Sciatic nerve (tissue), 2 donors: ENCODE measurements at regions of chr9 and their contacts with region 1.

Region 1: GRCh38 chr9:75149841-75150241 is 61.5 kb downstream of the OSTF1 start:
- DNase-seq: no peak
- ATAC-seq: no peak

Region 2: GRCh38 chr9:75096796-75097195 is 53.0 kb before region 1 on chr9:
- intact Hi-C with region 1: loop called (anchors 10 kb)
- DNase-seq: no peak
- ATAC-seq: no peak

Region 3: DNA sequence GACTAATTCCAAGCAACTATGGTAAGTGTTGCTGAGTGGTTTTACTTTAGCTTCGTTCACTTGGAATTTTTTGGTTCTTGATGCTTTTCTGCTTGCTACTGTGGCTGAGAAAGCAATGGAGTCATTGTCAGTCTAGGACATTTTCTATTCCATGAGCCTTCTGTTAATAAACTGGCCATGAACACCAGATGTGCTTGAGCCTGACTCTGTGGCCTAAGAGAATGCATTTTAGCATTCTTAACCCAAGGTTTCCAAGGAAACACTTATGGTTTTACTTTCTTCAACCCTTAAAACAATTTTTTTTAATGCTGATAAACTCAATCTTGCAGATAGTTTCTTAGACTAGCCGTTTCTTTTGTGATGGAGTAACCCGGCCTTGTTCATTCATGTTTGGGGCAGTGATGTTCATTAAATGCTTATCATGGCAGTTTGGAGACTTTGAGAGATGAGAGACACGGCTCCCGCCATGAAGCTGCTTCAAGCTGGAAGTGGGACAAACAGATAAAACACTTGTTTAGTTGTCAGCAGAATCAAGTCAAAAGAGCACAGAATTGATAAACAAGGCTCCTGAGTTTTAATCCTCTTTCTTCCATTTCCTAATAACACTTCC is 19.1 kb before region 1 on chr9:
- intact Hi-C with region 1: no loop called
- DNase-seq: no peak
- ATAC-seq: no peak